ENCODE measurements at regions of chr10 and their contacts with region 1.

Region 1: DNA sequence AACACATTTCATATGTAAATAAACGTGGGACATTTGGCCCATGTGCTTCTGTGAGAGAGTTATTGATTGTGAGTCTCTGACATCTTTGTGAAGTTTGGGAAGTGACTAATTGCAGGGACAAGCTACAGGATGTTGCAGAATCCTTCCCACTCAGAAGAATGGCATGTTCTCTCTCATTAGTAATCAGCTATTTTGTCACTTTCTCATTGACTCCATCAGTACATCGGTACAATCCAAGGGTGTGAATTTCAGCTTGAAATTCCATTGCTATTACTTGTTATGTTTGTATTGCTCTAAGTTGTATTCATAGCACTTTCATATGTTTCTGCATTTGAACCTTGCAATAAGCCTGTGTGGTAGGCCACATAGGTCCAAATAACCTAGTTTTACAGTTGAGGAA is 100.0 kb upstream of the KCNMA1 start:
- DNase-seq: peak; percentile 86
- H3K4me3 Mint-ChIP-seq: peak overlapping the region; percentile 4
- H3K27ac Mint-ChIP-seq: peak overlapping the region; percentile 84
- H3K4me1 Mint-ChIP-seq: peaks cover 37% of the 10 kb centered on the region
- H3K27me3 Mint-ChIP-seq: no peaks in the 10 kb centered on the region
- CTCF ChIP-seq: no peak

Region 2: DNA sequence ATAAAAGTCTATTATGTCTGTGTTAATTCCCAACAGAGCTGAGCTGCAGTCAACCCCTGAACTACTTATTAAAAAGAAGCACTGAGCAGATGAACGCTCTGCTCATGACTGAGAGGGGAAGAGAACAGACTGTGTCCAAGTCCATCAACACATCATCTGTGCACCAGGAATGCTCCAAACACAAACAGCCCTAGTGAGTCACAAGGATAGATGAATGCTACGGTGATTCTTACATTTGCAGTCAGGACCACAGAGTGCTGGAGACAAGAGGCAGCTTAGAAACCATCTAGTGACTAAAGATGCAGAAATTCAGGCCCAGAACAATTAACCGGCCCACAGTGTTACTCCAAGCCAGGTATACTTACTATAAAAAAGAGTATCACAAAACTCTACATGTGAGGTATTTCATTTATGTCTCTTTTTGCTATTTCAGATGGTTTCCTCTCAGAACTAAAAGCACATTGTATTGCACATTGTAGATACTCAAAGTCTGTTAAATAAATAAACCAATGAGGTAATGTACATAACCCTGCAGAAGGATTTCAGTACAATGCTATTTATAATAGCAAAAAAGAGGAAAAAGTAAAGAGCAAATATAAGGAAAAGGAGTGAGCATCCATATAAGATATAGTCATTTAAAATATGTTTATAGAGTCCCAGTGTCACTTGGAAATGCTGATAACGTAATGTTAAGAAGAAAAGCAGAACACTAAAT is 259.2 kb before region 1 on chr10:
- CTCF ChIA-PET with region 1: no interaction called
- POLR2A ChIA-PET with region 1: no interaction called
- intact Hi-C with region 1: no loop called
- DNase-seq: no peak
- H3K4me3 Mint-ChIP-seq: no peak overlapping the region
- H3K27ac Mint-ChIP-seq: no peak overlapping the region
- H3K4me1 Mint-ChIP-seq: peaks cover 16% of the 10 kb centered on the region
- H3K27me3 Mint-ChIP-seq: no peaks in the 10 kb centered on the region
- CTCF ChIP-seq: no peak

Region 3: DNA sequence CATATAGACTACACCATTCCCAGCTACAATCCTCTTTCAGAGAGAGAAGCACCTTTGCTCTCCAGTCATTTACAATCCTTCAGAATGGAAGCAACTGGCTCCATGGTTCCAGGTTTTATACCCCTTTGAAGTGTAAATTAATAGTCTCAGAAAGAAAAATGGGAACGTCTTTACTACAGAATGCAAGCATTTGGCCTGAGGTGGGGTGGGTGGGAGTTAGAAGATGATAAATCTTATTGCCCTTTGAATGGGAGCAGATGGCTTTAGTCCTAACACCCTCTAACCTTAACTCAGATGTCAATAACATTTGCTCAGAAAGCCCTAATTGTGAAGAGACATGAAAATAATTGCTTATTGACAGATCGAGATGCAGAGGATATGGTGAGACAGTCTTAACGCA is 15.8 kb before region 1 on chr10:
- CTCF ChIA-PET with region 1: interaction called, 8 read pairs
- POLR2A ChIA-PET with region 1: interaction called, 10 read pairs
- intact Hi-C with region 1: no loop called
- DNase-seq: no peak
- H3K4me3 Mint-ChIP-seq: no peak overlapping the region
- H3K27ac Mint-ChIP-seq: no peak overlapping the region
- H3K4me1 Mint-ChIP-seq: peaks cover 26% of the 10 kb centered on the region
- H3K27me3 Mint-ChIP-seq: no peaks in the 10 kb centered on the region
- CTCF ChIP-seq: no peak

Measured in MCF 10A (cell line).